Activated CD4-positive, alpha-beta memory T cell treated with anti-CD3 and anti-CD28 coated beads for 36 hours (primary cell): ENCODE measurements at regions of chr10 and their contacts with region 1.

Region 1: GRCh38 chr10:75210282-75211006 is at the start of gene VDAC2:
- DNase-seq: peak; percentile 95
- H3K4me3 Mint-ChIP-seq: peak within 1 kb of the TSS; percentile 89
- H3K27ac Mint-ChIP-seq: peak within 1 kb of the TSS; percentile 98
- H3K4me1 Mint-ChIP-seq: peaks cover 36% of the 10 kb centered on the region
- H3K27me3 Mint-ChIP-seq: no peaks in the 10 kb centered on the region
- total RNA-seq, gene VDAC2: 217 to 221 TPM

Region 2: GRCh38 chr10:73997787-73998622 is 1212.4 kb before region 1 on chr10 and contains the start of gene VCL:
- CTCF ChIA-PET with region 1: no interaction called
- POLR2A ChIA-PET with region 1: no interaction called
- intact Hi-C with region 1: loop called (anchors 5 kb)
- DNase-seq: peak; percentile 97
- H3K4me3 Mint-ChIP-seq: peak within 1 kb of the TSS; percentile 91
- H3K27ac Mint-ChIP-seq: peak within 1 kb of the TSS; percentile 89
- H3K4me1 Mint-ChIP-seq: peaks cover 33% of the 10 kb centered on the region
- H3K27me3 Mint-ChIP-seq: no peaks in the 10 kb centered on the region
- total RNA-seq, gene VCL: 27.8 to 29.2 TPM

Region 3: DNA sequence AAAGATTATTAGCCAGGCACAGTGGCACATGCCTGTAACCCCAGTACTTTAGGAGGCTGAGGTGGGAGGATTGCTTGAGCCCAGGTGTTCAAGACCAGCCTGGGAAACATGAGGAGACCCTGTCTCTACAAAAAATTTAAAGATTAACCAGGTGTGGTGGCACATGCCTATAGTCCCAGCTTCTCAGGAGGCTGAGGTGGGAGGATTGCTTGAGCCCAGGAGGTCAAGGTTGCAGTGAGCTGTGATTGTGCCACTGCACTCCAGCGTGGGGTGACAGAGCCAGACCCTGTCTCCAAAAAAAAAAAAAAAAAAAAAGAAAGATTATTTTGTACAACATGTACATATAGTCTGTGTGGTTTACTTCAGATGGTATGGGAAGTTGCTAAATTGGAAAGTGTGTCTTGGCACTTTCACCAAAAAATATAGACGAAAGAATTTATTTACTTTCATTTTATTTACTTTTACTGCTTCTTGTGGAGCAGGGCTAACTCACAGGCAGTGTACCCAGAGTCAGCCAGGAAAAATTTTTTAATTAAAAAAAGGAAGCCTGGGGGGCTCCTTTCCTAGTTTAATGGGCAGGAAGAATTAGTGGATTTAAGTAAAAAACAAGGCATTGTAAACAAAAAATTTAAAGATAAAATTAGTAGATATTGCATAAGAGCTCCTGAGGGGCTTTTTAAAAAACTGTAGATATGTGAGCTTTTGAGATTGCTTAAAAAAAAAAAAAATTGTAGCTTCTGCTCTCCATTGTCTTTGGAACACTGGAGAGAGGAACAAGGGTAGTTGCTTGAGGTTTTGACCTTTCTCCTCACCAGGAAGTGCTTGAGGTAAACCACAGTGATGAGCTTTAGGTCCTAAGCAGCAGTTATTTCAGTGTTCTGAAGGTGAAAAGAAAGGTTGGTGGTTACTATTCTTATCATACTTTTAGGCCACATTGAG is 44.5 kb before region 1 on chr10:
- CTCF ChIA-PET with region 1: no interaction called
- POLR2A ChIA-PET with region 1: no interaction called
- intact Hi-C with region 1: loop called (anchors 2 kb)
- DNase-seq: no peak
- H3K4me3 Mint-ChIP-seq: no peak overlapping the region
- H3K27ac Mint-ChIP-seq: peak overlapping the region; percentile 84
- H3K4me1 Mint-ChIP-seq: peaks cover 36% of the 10 kb centered on the region
- H3K27me3 Mint-ChIP-seq: no peaks in the 10 kb centered on the region

Region 4: DNA sequence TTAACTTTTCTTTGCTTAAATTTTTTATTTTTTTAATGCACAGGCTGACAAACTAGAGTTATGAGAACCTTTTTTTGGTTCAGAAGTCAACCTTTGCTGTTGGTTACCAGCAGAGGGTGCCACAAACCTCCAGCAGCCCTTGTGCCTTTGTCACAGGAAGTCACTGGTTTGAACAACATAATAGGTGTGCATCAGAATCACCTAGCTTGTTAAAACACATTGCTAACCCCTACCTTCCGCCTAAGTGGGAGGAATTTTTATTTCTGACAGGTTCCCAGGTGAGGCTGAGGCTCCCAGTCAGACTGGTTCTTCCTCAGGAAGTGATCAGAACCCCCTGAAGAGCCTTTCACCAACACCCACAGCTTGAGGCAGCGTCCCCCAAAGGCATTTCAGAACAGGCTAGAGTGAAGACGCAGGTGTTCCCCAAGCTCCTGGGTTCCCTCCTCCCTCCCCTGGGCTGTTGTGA is 22.4 kb before region 1 on chr10:
- CTCF ChIA-PET with region 1: interaction called, 32 read pairs
- POLR2A ChIA-PET with region 1: interaction called, 14 read pairs
- intact Hi-C with region 1: loop called (anchors 1 kb)
- DNase-seq: peak; percentile 75
- H3K4me3 Mint-ChIP-seq: no peak overlapping the region
- H3K27ac Mint-ChIP-seq: peak overlapping the region; percentile 56
- H3K4me1 Mint-ChIP-seq: peaks cover 9% of the 10 kb centered on the region
- H3K27me3 Mint-ChIP-seq: no peaks in the 10 kb centered on the region

Region 5: DNA sequence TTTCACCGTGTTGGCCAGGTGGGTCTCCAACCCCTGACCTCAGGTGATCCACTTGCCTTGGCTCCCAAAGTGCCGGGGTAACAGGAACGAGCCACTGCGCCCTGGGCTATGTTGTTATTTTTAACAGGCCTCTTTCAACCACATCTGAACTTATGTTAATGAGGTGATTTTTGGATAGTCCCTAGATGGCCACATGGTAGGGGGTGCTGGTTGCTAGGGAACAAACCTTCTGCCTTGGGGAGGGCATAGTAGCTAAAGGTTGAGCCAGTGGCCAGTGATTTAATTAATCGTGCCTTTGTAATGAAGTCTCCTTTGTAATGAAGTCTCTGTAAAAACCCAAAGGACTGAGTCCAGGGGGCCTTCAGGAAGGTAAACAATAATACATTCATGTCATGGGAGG is 16.2 kb after region 1 on chr10:
- CTCF ChIA-PET with region 1: interaction called, 98 read pairs
- POLR2A ChIA-PET with region 1: interaction called, 54 read pairs
- intact Hi-C with region 1: loop called (anchors 1 kb)
- DNase-seq: no peak
- H3K4me3 Mint-ChIP-seq: no peak overlapping the region
- H3K27ac Mint-ChIP-seq: peak overlapping the region; percentile 67
- H3K4me1 Mint-ChIP-seq: peaks cover 58% of the 10 kb centered on the region
- H3K27me3 Mint-ChIP-seq: no peaks in the 10 kb centered on the region

Region 6: DNA sequence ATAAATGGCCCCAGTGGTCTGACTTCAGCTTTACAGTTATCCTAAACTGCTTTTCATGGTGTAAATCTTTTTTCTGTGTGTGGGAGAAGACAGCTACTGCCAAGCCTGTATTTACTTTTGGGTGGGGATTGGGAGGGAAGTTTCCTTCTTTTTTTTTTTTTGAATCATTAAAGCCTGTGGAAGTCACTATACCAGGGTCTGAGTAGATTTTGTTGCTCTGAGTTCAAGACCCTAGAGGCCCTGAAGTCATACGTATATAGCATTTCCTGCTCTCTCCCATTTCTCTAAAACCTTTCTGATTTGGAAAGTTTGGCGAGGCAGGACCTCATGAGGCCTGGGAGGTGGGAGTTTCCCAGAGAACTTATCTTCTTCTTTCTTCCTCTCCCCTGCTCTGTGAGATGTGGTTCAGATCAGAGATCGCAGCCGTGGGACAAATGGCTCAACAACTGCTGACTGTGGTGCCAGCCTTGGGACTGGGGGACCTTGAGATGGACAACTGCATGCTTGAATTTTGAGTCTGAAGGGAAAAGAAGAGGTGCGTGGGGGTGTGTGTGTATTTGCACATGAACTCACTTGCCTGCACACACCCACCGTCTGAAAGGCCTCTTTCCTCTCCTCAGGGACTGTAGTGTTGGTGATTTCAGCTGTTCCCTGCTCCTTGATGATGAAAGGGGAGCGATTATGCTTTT is 239.1 kb after region 1 on chr10:
- CTCF ChIA-PET with region 1: no interaction called
- POLR2A ChIA-PET with region 1: no interaction called
- intact Hi-C with region 1: no loop called
- DNase-seq: no peak
- H3K4me3 Mint-ChIP-seq: no peak overlapping the region
- H3K27ac Mint-ChIP-seq: no peak overlapping the region
- H3K4me1 Mint-ChIP-seq: no peaks in the 10 kb centered on the region
- H3K27me3 Mint-ChIP-seq: peaks cover 18% of the 10 kb centered on the region